CD4-positive, alpha-beta memory T cell (primary cell): ENCODE measurements at regions of chrX and their contacts with region 1.

Region 1: DNA sequence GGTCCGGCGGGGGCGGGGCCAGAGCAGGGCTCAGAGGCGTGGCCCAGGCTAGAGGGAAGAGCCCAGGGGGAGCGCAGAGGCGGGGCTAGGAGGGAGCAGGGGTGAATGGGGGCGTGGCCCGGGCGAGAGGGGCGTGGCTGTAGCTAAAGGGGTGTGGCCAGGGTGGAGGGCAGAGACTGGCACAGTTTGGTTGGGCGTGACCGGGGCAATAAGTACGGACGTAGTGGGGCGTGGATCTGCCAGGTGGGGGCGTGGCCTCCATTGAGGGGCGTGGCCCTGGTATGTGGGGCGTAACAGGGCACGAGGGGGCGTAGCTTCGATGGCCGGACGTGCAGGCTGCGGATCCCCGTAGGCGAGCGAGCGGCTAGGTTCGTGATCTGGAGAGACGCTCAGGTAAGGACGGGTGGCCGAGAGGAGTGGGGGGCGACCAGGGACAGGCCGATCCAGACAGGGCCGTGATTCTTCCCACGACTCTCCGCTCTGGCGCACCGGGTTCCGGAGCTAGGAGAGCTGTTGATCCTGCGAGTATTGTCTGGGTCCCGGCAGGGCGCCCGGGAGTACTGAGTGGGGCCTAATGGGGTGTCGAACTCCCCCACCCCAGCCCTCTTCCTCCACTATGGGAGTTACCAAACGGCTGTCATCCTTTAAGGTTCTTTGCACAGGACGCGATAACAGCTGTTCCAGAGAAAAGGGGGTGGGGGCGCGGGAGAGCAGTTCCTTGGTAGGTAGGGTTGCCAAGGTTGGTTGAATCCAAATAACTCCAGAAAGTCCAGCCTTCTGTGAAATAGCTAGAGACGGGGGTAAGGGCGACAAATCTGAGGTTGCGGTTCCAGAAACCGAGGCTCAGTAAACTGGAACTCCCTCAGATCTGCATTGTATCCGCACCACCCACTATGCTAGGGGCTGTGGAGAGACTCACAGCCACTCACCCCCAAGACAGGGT is at the start of gene CA5B:
- DNase-seq: peak; percentile 95 to 100 (median 99)
- H3K4me3 ChIP-seq: peak within 1 kb of the TSS; percentile 57 to 81
- H3K4me3 Mint-ChIP-seq: peak within 1 kb of the TSS; percentile 94 to 99 (median 97)
- H3K27ac ChIP-seq: peak within 1 kb of the TSS; percentile 87
- H3K27ac Mint-ChIP-seq: peak within 1 kb of the TSS; percentile 93 to 99 (median 97)
- H3K4me1 ChIP-seq: peaks cover 40% of the 10 kb centered on the region
- H3K4me1 Mint-ChIP-seq: peaks cover 30 to 57% (median 45%) of the 10 kb centered on the region in 4 donors
- H3K27me3 ChIP-seq: no peaks in the 10 kb centered on the region
- H3K27me3 Mint-ChIP-seq: no peaks in the 10 kb centered on the region
- total RNA-seq, gene CA5B: 45.7 to 54.5 TPM

Region 2: DNA sequence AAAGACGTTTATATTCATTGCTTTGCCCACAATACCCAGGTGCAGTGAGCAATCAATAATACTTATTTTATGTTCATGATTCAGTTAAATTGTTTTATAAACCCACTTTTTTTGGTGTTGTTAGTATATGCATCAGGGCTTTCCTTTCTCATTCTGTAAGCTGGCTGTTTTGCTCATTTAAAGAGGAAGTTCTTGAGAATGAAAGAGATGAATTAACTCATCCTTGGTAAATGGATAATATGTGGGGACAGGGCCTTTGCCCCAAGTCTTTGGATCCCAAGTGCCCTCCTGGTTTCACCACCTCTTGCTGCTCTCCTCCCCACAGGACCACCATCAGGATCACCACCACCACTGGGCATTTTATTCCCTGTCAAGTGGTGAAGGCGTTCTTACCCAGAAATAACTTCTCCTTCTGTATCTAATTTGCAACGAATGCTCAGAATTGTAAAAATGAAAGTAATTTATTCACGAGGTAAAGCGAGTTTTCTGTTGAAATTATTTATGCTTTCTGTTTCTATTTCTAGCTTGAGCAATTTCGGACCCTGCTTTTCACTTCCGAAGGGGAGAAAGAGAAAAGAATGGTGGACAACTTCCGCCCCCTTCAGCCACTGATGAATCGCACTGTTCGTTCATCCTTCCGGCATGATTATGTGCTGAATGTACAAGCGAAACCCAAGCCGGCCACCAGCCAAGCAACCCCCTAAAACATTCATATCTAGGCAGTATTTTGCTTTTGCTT is 43.9 kb after region 1 on chrX:
- CTCF ChIA-PET with region 1: interaction called, 4 read pairs
- POLR2A ChIA-PET with region 1: interaction called, 16 read pairs
- intact Hi-C with region 1: loop called (anchors 2 kb)
- DNase-seq: peak; percentile 14 to 40 (median 21)
- H3K4me3 ChIP-seq: peak overlapping the region in 1 of 2 donors; percentile 23
- H3K4me3 Mint-ChIP-seq: peak overlapping the region; percentile 76 to 95 (median 86)
- H3K27ac ChIP-seq: peak overlapping the region; percentile 70
- H3K27ac Mint-ChIP-seq: peak overlapping the region; percentile 89 to 98 (median 98)
- H3K4me1 ChIP-seq: peaks cover 15% of the 10 kb centered on the region
- H3K4me1 Mint-ChIP-seq: peaks cover 3 to 10% (median 9%) of the 10 kb centered on the region in 4 donors
- H3K27me3 ChIP-seq: no peaks in the 10 kb centered on the region
- H3K27me3 Mint-ChIP-seq: no peaks in the 10 kb centered on the region

Region 3: DNA sequence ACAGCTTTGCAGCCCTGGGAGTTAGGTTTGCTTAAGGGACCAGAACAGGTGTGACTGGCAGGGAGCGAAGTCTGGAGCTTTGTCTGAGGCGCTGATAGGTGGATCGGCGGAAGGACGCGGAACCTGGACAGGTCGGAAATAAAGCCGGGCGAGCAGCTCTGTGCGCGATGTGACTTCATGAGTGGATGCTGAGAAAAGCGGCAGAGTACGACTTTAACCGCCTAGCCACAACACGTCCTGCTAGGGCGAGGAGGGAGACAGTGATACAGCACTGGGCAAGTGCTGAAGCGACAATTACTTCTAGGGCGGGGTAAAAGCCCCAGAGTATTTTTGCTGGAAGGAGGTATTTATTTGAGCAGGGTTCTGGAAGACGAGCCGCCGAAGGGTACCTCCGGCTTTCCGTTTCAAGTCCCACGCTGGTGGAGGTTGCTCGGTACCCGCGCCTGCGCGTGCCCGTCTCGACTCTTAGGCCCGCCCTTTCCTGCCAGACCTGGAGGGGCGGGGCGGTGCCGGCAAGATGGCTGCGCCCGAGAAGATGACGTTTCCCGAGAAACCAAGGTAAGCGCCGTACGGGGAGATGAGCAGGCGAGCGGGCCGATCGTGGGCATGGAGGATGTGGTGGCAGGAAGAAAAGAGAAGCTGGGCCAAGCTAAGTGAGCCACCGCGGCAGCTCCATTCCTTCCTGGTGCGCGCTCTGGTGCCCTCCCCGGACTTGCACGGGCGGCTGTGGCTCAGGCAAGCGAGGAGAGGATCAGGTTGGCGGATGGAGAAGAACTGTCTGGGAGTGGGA is 51.9 kb after region 1 on chrX and contains the start of gene ZRSR2:
- CTCF ChIA-PET with region 1: no interaction called
- POLR2A ChIA-PET with region 1: interaction called, 32 read pairs
- intact Hi-C with region 1: loop called (anchors 1 kb)
- DNase-seq: peak; percentile 91 to 95 (median 94)
- H3K4me3 ChIP-seq: peak within 1 kb of the TSS; percentile 65 to 76
- H3K4me3 Mint-ChIP-seq: peak within 1 kb of the TSS in 1 of 8 donors; percentile 18
- H3K27ac ChIP-seq: peak within 1 kb of the TSS; percentile 83
- H3K27ac Mint-ChIP-seq: peak within 1 kb of the TSS in 1 of 7 donors; percentile 68
- H3K4me1 ChIP-seq: peaks cover 37% of the 10 kb centered on the region
- H3K4me1 Mint-ChIP-seq: peaks cover 13 to 35% (median 24%) of the 10 kb centered on the region in 4 donors
- H3K27me3 ChIP-seq: no peaks in the 10 kb centered on the region
- H3K27me3 Mint-ChIP-seq: no peaks in the 10 kb centered on the region
- total RNA-seq, gene ZRSR2: 30.1 to 30.7 TPM

Region 4: DNA sequence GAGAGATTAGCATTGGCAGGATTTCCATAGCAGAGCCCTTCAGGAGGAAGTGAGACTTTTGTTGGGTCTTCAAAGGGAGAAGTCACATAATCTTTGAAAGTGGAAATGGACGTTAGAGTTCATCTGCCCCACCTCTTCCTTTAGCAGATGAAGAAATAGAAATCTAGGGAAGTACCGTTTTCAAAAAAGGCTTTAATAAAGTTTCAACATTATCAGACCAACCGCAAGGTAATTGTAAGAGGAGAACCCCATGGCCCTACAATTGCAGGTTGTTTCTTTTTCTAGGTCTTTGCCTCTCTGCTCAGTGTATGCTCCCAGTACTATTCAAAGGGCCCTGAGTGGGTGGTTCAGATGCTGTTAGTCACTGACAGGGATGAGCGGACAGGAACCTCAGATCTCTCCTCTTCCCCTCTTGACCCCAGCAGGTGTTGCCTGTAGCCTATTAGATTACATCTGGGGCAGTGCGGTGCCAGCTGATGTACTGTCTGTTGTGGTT is 165.0 kb after region 1 on chrX:
- CTCF ChIA-PET with region 1: no interaction called
- POLR2A ChIA-PET with region 1: no interaction called
- intact Hi-C with region 1: no loop called
- DNase-seq: no peak
- H3K4me3 ChIP-seq: no peak overlapping the region
- H3K4me3 Mint-ChIP-seq: no peak overlapping the region
- H3K27ac ChIP-seq: no peak overlapping the region
- H3K27ac Mint-ChIP-seq: no peak overlapping the region
- H3K4me1 ChIP-seq: no peaks in the 10 kb centered on the region
- H3K4me1 Mint-ChIP-seq: no peaks in the 10 kb centered on the region
- H3K27me3 ChIP-seq: no peaks in the 10 kb centered on the region
- H3K27me3 Mint-ChIP-seq: no peaks in the 10 kb centered on the region